ENCODE measurements at regions of chr5 and their contacts with region 1.

Region 1: GRCh38 chr5:168132241-168132641 is 159.2 kb upstream of the WWC1 start:
- DNase-seq: no peak
- H3K4me3 ChIP-seq: no peak overlapping the region
- H3K27me3 ChIP-seq: no peaks in the 10 kb centered on the region; the same call in 1 of the 2 replicates
- CTCF ChIP-seq: no peak

Region 2: GRCh38 chr5:168118042-168118676 is 14.1 kb before region 1 on chr5:
- CTCF ChIA-PET with region 1: interaction called, 10 read pairs
- POLR2A ChIA-PET with region 1: no interaction called
- DNase-seq: no peak
- H3K4me3 ChIP-seq: no peak overlapping the region
- H3K27me3 ChIP-seq: no peaks in the 10 kb centered on the region
- CTCF ChIP-seq: no peak

Region 3: GRCh38 chr5:168142402-168142801 is 10.2 kb after region 1 on chr5:
- CTCF ChIA-PET with region 1: no interaction called
- POLR2A ChIA-PET with region 1: no interaction called
- DNase-seq: no peak
- H3K4me3 ChIP-seq: no peak overlapping the region
- H3K27me3 ChIP-seq: no peaks in the 10 kb centered on the region
- CTCF ChIP-seq: no peak

Measured in BJ (cell line).